ENCODE measurements at regions of chr2 and their contacts with region 1.

Region 1: GRCh38 chr2:85750587-85751575 is 2.9 kb upstream of the ATOH8 start:
- DNase-seq: peak; percentile 72
- H3K4me3 ChIP-seq: no peak overlapping the region
- H3K27ac ChIP-seq: no peak overlapping the region
- H3K4me1 ChIP-seq: peaks cover 6% of the 10 kb centered on the region
- H3K27me3 ChIP-seq: no peaks in the 10 kb centered on the region
- CTCF ChIP-seq: peak; percentile 83 to 85
- POLR2A ChIP-seq: no peak

Region 2: DNA sequence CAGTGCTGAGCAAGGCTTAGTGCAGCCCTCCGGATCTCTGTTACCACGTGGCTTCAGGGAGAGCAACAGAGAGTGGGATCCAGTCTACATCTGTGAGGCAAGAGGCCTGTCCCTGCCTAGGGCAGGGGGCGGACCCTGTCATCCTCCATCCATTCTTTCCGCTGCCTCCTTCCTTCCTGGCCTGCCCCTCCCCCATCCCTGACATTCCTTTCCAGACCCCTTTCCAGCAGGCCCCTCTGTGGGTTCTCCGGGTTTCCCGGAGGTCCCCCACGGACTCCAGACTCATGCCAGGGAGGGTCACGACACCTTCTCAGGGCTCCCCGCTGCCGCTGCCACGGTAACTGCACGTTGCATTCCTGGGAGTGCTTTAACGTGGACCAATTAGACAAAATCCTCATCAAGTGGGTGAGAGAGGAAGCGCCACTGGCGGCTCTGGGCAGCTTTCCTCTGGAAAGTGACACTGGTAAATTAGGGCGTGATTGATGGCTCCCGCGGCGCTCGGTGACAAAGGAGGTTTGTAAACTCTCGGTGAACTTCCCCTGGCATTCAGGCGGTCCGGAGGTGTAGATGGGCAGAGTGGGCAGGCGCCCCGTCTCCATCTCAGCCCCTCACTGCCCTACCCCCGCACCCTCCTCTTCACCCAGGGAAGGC is 14.3 kb after region 1 on chr2:
- CTCF ChIA-PET with region 1: interaction called, 106 read pairs
- POLR2A ChIA-PET with region 1: interaction called, 3 read pairs
- dilution Hi-C with region 1: no loop called
- intact Hi-C with region 1: loop called (anchors 1 kb)
- DNase-seq: peak; percentile 30
- H3K4me3 ChIP-seq: no peak overlapping the region
- H3K27ac ChIP-seq: peak overlapping the region; percentile 40
- H3K4me1 ChIP-seq: peaks cover 35% of the 10 kb centered on the region
- H3K27me3 ChIP-seq: no peaks in the 10 kb centered on the region
- CTCF ChIP-seq: no peak
- POLR2A ChIP-seq: no peak

Region 3: DNA sequence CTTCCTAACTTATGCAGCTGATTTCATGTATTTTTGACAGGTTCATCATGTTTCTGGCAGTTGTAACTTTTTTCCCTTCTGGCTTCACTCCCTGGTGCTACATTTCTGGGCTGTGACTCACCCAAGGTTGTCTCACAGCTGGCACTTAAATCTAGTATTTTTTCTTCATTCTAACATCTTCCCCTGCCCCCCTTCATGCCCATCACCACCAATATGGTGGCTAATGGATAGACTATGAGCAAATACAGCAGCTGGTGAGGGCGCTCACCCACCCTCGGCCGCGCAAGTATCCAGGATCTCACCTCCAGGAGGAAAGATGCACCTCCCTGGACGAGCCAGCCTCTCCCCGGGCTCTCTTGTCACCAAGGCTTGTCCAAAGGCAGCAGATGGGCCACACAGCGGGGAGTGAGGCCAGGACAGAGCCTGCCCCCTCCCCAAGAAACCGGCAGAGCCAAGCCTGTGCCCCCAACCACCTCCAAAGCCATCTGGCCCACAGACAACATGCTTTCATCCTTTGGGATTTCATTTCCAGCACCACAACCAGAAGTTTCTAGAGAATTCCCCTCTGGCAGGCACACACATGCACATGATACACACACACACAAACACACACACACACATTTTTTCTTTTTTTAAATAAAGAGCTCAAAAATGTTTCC is 42.0 kb after region 1 on chr2:
- CTCF ChIA-PET with region 1: interaction called, 126 read pairs
- POLR2A ChIA-PET with region 1: no interaction called
- dilution Hi-C with region 1: no loop called
- intact Hi-C with region 1: loop called (anchors 1 kb)
- DNase-seq: peak; percentile 88
- H3K4me3 ChIP-seq: no peak overlapping the region
- H3K27ac ChIP-seq: peak overlapping the region; percentile 51
- H3K4me1 ChIP-seq: peaks cover 25% of the 10 kb centered on the region
- H3K27me3 ChIP-seq: no peaks in the 10 kb centered on the region
- CTCF ChIP-seq: no peak
- POLR2A ChIP-seq: no peak

Region 4: DNA sequence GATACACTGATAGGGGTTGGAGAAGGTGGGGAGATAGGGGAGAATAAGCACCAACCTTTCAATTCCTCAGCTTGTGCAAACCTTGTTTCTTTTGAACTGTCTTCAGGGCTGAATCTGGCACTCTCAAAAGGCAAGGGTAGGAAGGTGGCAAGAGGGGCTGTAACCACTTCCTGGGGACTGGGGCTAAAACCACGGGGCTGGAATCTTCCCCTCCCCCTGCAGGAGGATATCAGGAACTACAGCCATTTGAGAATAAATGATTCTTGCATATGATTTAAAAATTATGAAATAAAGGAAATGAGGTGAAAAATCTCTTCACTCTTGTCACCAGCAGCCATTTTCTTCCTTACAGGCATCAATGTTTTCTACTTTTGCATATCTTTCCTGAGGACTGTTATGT is 53.7 kb after region 1 on chr2:
- CTCF ChIA-PET with region 1: interaction called, 25 read pairs
- POLR2A ChIA-PET with region 1: interaction called, 9 read pairs
- dilution Hi-C with region 1: no loop called
- intact Hi-C with region 1: loop called (anchors 1 kb)
- DNase-seq: peak; percentile 25
- H3K4me3 ChIP-seq: no peak overlapping the region
- H3K27ac ChIP-seq: no peak overlapping the region
- H3K4me1 ChIP-seq: no peaks in the 10 kb centered on the region
- H3K27me3 ChIP-seq: no peaks in the 10 kb centered on the region
- CTCF ChIP-seq: peak; percentile 49 to 56
- POLR2A ChIP-seq: no peak

Region 5: GRCh38 chr2:85865539-85866164 is 114.8 kb after region 1 on chr2:
- CTCF ChIA-PET with region 1: no interaction called
- POLR2A ChIA-PET with region 1: no interaction called
- dilution Hi-C with region 1: no loop called
- intact Hi-C with region 1: no loop called
- DNase-seq: no peak
- H3K4me3 ChIP-seq: no peak overlapping the region
- H3K27ac ChIP-seq: no peak overlapping the region
- H3K4me1 ChIP-seq: peaks cover 15% of the 10 kb centered on the region
- H3K27me3 ChIP-seq: no peaks in the 10 kb centered on the region
- CTCF ChIP-seq: no peak
- POLR2A ChIP-seq: no peak

Measured in endothelial cell of umbilical vein (primary cell).